ENCODE measurements at regions of chr10 and their contacts with region 1.

Region 1: GRCh38 chr10:23994479-23995046 is 214.4 kb upstream of the KIAA1217 start:
- DNase-seq: no peak
- ATAC-seq: peak; percentile 80

Region 2: GRCh38 chr10:23777153-23777552 is 217.4 kb before region 1 on chr10:
- intact Hi-C with region 1: no loop called
- DNase-seq: no peak
- ATAC-seq: no peak

Region 3: GRCh38 chr10:24197263-24197662 is 202.7 kb after region 1 on chr10:
- intact Hi-C with region 1: loop called (anchors 1 kb)
- DNase-seq: no peak
- ATAC-seq: no peak

Region 4: DNA sequence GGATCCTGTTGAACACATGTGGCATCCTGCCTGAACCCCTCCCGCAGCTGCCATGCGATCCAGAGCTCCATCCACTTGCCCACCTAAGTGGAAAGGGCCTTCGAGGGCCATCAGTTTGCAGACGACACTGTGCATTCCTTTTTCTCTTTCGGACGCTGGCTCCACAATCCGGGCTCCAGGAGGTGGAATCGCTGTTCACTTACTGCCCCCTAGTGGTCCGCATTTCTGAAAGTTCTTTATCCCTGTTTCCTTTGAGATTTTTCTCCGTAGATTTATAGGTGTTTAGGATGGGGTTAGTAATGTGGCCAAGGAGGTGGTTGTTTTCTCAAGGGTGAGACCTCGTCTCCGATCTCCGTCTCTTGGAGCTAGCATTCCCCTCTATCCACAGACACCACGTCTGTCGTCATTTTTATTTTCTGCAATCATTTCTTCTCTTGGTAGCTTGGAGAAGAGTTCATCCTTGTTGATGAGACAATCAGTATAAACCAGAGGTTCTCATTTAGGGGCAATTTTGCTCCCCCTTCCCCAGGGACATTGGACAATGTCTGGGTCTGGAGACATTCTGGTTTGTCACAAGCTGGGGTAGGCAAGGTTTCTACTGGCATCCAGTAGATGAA is 524.5 kb after region 1 on chr10:
- intact Hi-C with region 1: loop called (anchors 5 kb)
- DNase-seq: peak; percentile 53
- ATAC-seq: peak; percentile 60

Measured in Right ventricle myocardium inferior (tissue), 1 donor.